HepG2 (cell line): ENCODE measurements at regions of chr5 and their contacts with region 1.

Region 1: DNA sequence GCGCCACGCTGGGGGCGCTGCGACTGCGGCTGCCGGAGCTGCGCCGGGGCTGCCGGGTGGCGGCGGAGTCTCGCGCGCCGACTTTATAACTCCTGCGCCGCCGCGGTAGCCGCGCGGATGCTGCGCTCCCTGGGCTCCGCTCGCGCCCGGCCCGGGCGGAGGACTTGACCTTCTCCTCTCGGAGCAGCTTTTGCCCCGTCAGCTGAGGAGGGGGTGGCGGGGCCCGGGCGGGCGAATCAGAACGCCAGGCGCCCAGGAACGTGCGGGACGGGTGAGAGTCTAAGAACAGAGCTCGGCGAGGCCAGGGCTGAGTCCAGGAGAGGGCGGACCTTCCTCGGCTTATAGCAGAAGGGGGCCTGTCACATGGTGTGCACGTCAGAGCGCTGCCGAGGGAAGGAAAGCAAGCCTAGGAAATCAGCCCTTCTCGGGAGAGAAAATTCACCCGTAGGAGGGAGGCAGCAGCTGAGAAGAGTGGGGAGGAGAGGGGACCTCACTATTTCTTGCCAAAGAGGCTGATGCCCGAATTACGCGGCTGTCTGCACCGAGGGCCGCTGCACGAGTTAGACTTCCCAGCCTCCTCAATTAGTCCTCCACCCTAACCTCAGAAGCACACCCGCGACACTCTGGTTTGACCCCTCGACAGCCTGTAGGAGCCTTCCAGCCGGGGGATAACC is at the start of gene FOXD1:
- DNase-seq: peak; percentile 32
- ATAC-seq: peak; percentile 79
- H3K4me3 ChIP-seq: peak within 1 kb of the TSS; percentile 55 to 72 (median 66)
- H3K27ac ChIP-seq: no peak within 1 kb of the TSS
- H3K4me1 ChIP-seq: peaks cover 27% of the 10 kb centered on the region
- H3K27me3 ChIP-seq: peaks cover 15 to 84% of the 10 kb centered on the region in 2 experiments
- CTCF ChIP-seq: 0 out of 2 replicates have a peak, but pooled peaks have one; percentile 17
- EP300 ChIP-seq: no peak
- POLR2A ChIP-seq: no peak
- RAD21 ChIP-seq: no peak
- total RNA-seq, gene FOXD1: 0.04 TPM in 1 of 2 replicates, not detected in the other

Region 2: DNA sequence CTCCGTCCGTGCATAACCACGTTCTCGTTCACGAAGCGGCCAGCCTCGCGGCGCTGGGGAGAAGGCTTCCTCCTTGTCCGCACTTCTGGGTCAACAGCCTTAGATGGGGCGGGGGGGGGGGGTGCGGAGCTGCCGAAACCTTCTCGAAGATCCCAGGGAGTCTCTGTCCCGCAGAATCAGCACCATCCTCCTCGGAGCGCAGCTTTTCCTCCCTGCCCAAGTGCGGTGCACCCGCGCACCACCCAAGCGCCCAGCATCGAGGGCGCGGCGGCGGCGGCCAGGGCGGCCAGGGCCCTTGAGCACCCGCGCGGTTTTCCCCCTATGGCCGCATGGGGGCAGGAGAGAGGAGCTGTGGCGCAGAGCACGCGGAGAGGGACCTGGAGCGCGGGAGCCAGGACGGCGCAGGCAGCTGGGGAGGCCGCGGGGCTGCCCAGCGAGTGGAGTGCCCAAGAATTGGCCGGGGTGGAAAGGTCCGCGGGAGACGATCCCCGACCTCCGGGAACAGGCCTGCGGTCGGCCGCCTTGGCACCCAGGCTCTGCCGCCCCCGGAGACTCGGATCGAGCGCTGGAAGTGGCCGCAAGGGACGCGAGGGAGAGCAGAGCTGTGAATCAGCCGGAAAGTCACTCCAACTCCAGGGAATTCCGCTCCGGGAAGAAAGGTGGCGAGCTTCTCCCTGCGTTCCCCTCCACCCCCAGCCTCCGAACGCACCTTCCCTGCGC is 232.5 kb before region 1 on chr5:
- CTCF ChIA-PET with region 1: interaction called, 11 read pairs
- POLR2A ChIA-PET with region 1: interaction called, 3 read pairs
- in situ Hi-C with region 1: loop called (anchors 10 kb)
- intact Hi-C with region 1: loop called (anchors 1 kb)
- DNase-seq: peak; percentile 49
- ATAC-seq: peak; percentile 99
- H3K4me3 ChIP-seq: peak overlapping the region in 2 of 3 experiments; percentile 36 to 64; a peak in 3 of 6 replicates
- H3K27ac ChIP-seq: no peak overlapping the region
- H3K4me1 ChIP-seq: 0 out of 2 replicates have a peak, but pooled peaks cover 6% of the 10 kb centered on the region
- H3K27me3 ChIP-seq: peaks cover 4 to 33% of the 10 kb centered on the region in 2 experiments
- CTCF ChIP-seq: peak; percentile 89
- EP300 ChIP-seq: no peak
- POLR2A ChIP-seq: no peak
- RAD21 ChIP-seq: peak; percentile 68

Region 3: GRCh38 chr5:73471654-73472053 is 23.1 kb after region 1 on chr5:
- CTCF ChIA-PET with region 1: no interaction called
- POLR2A ChIA-PET with region 1: no interaction called
- in situ Hi-C with region 1: no loop called
- intact Hi-C with region 1: no loop called
- DNase-seq: no peak
- ATAC-seq: no peak
- H3K4me3 ChIP-seq: no peak overlapping the region
- H3K27ac ChIP-seq: no peak overlapping the region
- H3K4me1 ChIP-seq: no peaks in the 10 kb centered on the region
- H3K27me3 ChIP-seq: peaks cover 0 to 15% of the 10 kb centered on the region in 2 experiments; a peak in 1 of 5 replicates
- CTCF ChIP-seq: no peak
- EP300 ChIP-seq: no peak
- POLR2A ChIP-seq: no peak
- RAD21 ChIP-seq: no peak